Thyroid gland (tissue), 4 donors: ENCODE measurements at regions of chr11 and their contacts with region 1.

Region 1: GRCh38 chr11:129331871-129332274 is 43.8 kb upstream of the BARX2 start:
- DNase-seq: peak; percentile 83 to 90
- H3K4me3 ChIP-seq: no peak overlapping the region
- H3K27ac ChIP-seq: no peak overlapping the region
- H3K4me1 ChIP-seq: no peaks in the 10 kb centered on the region
- H3K27me3 ChIP-seq: no peaks in the 10 kb centered on the region
- CTCF ChIP-seq: peak; percentile 55 to 93 (median 80)
- POLR2A ChIP-seq: no peak

Region 2: GRCh38 chr11:129117595-129118350 is 214.1 kb before region 1 on chr11:
- intact Hi-C with region 1: loop called (anchors 2 kb)
- DNase-seq: peak; percentile 17 to 27
- H3K4me3 ChIP-seq: no peak overlapping the region
- H3K27ac ChIP-seq: no peak overlapping the region
- H3K4me1 ChIP-seq: no peaks in the 10 kb centered on the region
- H3K27me3 ChIP-seq: no peaks in the 10 kb centered on the region
- CTCF ChIP-seq: peak; percentile 55 to 93 (median 85)
- POLR2A ChIP-seq: no peak

Region 3: DNA sequence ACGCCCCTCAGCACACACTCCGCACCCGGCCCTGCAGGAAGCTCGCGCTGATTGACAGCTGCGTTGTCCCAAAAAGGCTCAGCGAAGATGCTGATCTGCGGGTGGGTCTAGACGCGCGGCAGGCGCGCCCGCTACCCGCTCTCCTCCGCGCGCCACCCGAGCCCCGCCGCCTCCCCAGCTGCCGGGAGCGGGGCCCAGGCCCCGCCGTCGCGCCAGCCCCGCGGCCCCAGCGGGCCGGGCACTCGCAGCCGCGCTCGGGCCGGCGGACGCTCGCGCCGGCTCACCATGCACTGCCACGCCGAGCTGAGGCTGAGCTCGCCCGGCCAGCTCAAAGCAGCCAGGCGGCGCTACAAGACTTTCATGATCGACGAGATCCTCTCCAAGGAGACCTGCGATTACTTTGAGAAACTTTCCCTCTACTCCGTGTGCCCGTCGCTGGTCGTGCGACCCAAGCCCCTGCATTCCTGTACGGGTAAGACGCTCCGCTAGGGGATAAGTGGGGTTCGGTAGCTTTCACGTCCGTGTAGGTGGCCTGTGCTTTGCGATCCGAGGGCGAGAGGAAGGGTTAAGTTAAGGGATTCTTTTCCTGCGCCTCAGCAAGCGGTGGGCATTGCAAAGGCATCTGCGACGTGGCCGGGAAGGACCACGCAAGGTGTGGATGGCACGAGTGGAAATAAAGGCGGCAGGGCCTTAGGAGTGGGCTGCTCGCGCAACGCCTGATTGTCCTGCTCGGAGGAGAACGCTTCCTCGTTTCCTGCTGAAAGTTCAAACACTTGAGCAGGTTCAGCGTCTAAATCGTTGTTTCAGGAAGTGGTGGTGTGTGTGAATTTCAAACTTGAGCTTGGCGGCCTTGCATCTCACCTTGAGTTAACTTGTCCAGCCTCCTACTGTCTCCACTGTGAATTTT is 44.1 kb after region 1 on chr11 and contains the start of gene BARX2:
- intact Hi-C with region 1: no loop called
- DNase-seq: peak; percentile 49 to 56
- H3K4me3 ChIP-seq: peak within 1 kb of the TSS in 1 of 3 donors; percentile 17
- H3K27ac ChIP-seq: no peak within 1 kb of the TSS
- H3K4me1 ChIP-seq: peaks cover 20 to 29% of the 10 kb centered on the region in 2 donors
- H3K27me3 ChIP-seq: peaks cover 12% of the 10 kb centered on the region
- CTCF ChIP-seq: peak in 3 of 6 experiments; percentile 13 to 46 (median 33)
- POLR2A ChIP-seq: no peak
- total RNA-seq, gene BARX2: 0.49 to 0.78 TPM in 2 of 4 donors, not detected in the others